Lower leg skin (tissue), 4 donors: ENCODE measurements at regions of chr9 and their contacts with region 1.

Region 1: DNA sequence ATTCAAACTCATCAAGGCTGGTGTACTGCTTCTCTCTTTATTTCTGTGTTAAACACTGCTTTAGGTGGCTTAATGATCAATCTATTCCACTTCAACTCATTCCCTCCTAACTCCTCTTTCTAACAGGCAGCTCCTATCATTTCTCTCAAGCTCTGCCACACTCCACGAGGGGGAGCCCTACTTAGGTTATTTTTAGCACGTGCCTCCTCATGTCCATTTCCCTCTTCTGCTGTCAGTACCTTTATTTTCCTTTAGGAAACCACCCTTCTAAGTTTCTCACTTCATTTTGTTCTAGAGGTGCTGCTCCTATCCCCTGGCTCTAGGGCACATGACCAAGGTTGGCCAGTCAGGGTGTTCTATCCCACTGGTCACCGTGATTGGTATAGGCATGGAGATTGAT is 6.7 kb upstream of the BRINP1 start:
- DNase-seq: no peak
- H3K4me3 ChIP-seq: no peak overlapping the region
- CTCF ChIP-seq: no peak
- POLR2A ChIP-seq: no peak

Region 2: GRCh38 chr9:119601632-119602031 is 225.7 kb after region 1 on chr9:
- intact Hi-C with region 1: no loop called
- DNase-seq: no peak
- H3K4me3 ChIP-seq: no peak overlapping the region
- CTCF ChIP-seq: no peak
- POLR2A ChIP-seq: no peak

Region 3: GRCh38 chr9:119652931-119653330 is 277.0 kb after region 1 on chr9:
- intact Hi-C with region 1: loop called (anchors 10 kb)
- DNase-seq: no peak
- H3K4me3 ChIP-seq: no peak overlapping the region
- CTCF ChIP-seq: no peak
- POLR2A ChIP-seq: no peak